Activated T-helper 2 cell treated with anti-CD3 and anti-CD28 coated beads, Interferon-gamma antibody, Interleukin-2, Interleukin-4, amounts not matched to agents 10 μg/mL and 5 μg/mL and 100 μg/mL, durations not matched to agents 14 hours and 24 hours and 36 hours (primary cell): ENCODE measurements at regions of chr14 and their contacts with region 1.

Region 1: DNA sequence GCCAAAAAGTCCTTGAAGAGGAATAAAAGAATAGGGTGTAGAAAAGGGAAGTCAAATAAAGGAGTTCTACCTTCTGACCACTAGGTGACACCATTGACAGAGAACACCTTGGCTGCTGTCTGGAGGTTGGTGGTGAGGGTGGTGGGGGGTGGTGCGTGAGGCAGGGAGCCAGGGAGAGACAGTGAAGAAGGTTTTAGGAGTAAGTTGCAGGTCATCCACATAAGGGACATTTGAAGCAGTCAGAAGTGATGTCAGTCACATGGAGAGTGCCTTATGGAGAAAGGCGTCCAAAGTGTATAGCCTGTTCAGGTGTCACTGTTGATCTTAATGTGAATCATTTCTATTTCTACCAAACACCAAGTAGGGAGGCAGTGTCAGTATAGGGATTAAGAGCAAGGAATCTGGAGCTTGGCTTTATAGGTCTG is 279.3 kb upstream of the DDHD1 start:
- DNase-seq: peak; percentile 11
- H3K4me3 Mint-ChIP-seq: no peak overlapping the region
- H3K27ac Mint-ChIP-seq: no peak overlapping the region
- H3K4me1 Mint-ChIP-seq: peaks cover 10% of the 10 kb centered on the region
- H3K27me3 Mint-ChIP-seq: no peaks in the 10 kb centered on the region

Region 2: GRCh38 chr14:53478174-53478573 is 45.8 kb after region 1 on chr14:
- intact Hi-C with region 1: no loop called
- DNase-seq: no peak
- H3K4me3 Mint-ChIP-seq: no peak overlapping the region
- H3K27ac Mint-ChIP-seq: no peak overlapping the region
- H3K4me1 Mint-ChIP-seq: no peaks in the 10 kb centered on the region
- H3K27me3 Mint-ChIP-seq: no peaks in the 10 kb centered on the region

Region 3: GRCh38 chr14:53509276-53510244 is 77.2 kb after region 1 on chr14:
- intact Hi-C with region 1: loop called (anchors 10 kb)
- DNase-seq: no peak
- H3K4me3 Mint-ChIP-seq: no peak overlapping the region
- H3K27ac Mint-ChIP-seq: no peak overlapping the region
- H3K4me1 Mint-ChIP-seq: peaks cover 21% of the 10 kb centered on the region
- H3K27me3 Mint-ChIP-seq: peaks cover 2% of the 10 kb centered on the region

Region 4: GRCh38 chr14:53539489-53540126 is 107.2 kb after region 1 on chr14:
- intact Hi-C with region 1: loop called (anchors 5 kb)
- DNase-seq: peak; percentile 32
- H3K4me3 Mint-ChIP-seq: no peak overlapping the region
- H3K27ac Mint-ChIP-seq: no peak overlapping the region
- H3K4me1 Mint-ChIP-seq: peaks cover 3% of the 10 kb centered on the region
- H3K27me3 Mint-ChIP-seq: peaks cover 7% of the 10 kb centered on the region

Region 5: GRCh38 chr14:54175298-54175942 is 743.0 kb after region 1 on chr14:
- intact Hi-C with region 1: loop called (anchors 5 kb)
- DNase-seq: peak; percentile 22
- H3K4me3 Mint-ChIP-seq: no peak overlapping the region
- H3K27ac Mint-ChIP-seq: no peak overlapping the region
- H3K4me1 Mint-ChIP-seq: peaks cover 4% of the 10 kb centered on the region
- H3K27me3 Mint-ChIP-seq: peaks cover 51% of the 10 kb centered on the region

Region 6: GRCh38 chr14:54338696-54339317 is 906.4 kb after region 1 on chr14:
- intact Hi-C with region 1: loop called (anchors 10 kb)
- DNase-seq: no peak
- H3K4me3 Mint-ChIP-seq: no peak overlapping the region
- H3K27ac Mint-ChIP-seq: no peak overlapping the region
- H3K4me1 Mint-ChIP-seq: no peaks in the 10 kb centered on the region
- H3K27me3 Mint-ChIP-seq: peaks cover 22% of the 10 kb centered on the region